H1 (cell line): ENCODE measurements at regions of chr14 and their contacts with region 1.

Region 1: GRCh38 chr14:95431199-95432143 is 85.0 kb downstream of the SYNE3 start:
- DNase-seq: peak in 1 of 2 experiments; percentile 63
- H3K4me3 ChIP-seq: no peak overlapping the region
- H3K27ac ChIP-seq: no peak overlapping the region
- H3K4me1 ChIP-seq: no peaks in the 10 kb centered on the region
- H3K27me3 ChIP-seq: no peaks in the 10 kb centered on the region
- CTCF ChIP-seq: peak; percentile 59 to 90 (median 78)
- EP300 ChIP-seq: no peak
- POLR2A ChIP-seq: no peak
- RAD21 ChIP-seq: peak; percentile 79 to 87

Region 2: DNA sequence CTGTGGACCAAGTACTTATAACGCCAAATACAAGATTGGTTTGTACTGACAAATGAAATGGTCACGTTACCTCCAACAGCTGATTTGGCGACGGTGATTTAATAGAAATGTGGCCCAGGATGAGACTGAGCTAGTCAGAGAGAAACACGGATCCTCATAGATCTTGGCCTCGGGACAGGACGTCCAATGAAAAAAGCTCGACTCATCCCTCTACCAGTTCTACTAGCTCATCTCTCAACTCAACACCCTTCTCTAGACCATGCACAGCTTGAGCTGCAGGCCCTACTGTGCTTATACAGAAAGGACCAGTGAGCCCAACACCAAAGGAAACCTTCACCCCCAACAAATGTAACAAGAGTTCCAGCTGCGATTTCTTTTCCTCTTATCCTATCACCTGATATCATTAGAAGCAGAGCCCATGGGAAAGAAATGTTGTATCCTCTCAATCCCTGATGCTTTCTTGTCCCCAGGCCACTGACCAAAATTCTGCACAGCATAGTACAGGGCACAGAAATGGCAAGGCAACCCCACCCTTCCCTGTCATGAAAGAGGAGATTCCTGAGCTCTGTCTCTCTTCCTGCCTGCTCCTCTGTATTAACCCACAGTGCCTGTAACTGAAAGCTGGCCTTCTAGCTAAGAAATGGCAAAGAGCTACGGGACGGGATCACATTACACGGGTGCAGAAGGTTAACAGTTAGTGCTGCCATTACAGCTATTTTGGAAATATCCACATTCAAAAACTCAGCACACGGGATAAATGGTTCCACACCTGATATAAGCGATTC is 313.3 kb before region 1 on chr14:
- CTCF ChIA-PET with region 1: interaction called, 12 read pairs
- POLR2A ChIA-PET with region 1: no interaction called
- DNase-seq: no peak
- H3K4me3 ChIP-seq: 0 out of 8 replicates have a peak overlapping the region, but pooled peaks of 1 of the 4 experiments have one; percentile 5
- H3K27ac ChIP-seq: no peak overlapping the region
- H3K4me1 ChIP-seq: peaks cover 0 to 5% (median 3%) of the 10 kb centered on the region in 4 experiments; a peak in 2 of 7 replicates
- H3K27me3 ChIP-seq: no peaks in the 10 kb centered on the region
- CTCF ChIP-seq: no peak
- EP300 ChIP-seq: no peak
- POLR2A ChIP-seq: no peak
- RAD21 ChIP-seq: no peak

Region 3: GRCh38 chr14:95282354-95283083 is 149.0 kb before region 1 on chr14:
- CTCF ChIA-PET with region 1: no interaction called
- POLR2A ChIA-PET with region 1: no interaction called
- DNase-seq: no peak
- H3K4me3 ChIP-seq: no peak overlapping the region
- H3K27ac ChIP-seq: no peak overlapping the region
- H3K4me1 ChIP-seq: no peaks in the 10 kb centered on the region; a peak in 1 of 7 replicates
- H3K27me3 ChIP-seq: no peaks in the 10 kb centered on the region
- CTCF ChIP-seq: no peak
- EP300 ChIP-seq: no peak
- POLR2A ChIP-seq: no peak
- RAD21 ChIP-seq: no peak

Region 4: GRCh38 chr14:95413289-95414215 is 17.9 kb before region 1 on chr14:
- CTCF ChIA-PET with region 1: interaction called, 25 read pairs
- POLR2A ChIA-PET with region 1: no interaction called
- DNase-seq: no peak
- H3K4me3 ChIP-seq: no peak overlapping the region
- H3K27ac ChIP-seq: no peak overlapping the region
- H3K4me1 ChIP-seq: peaks cover 0 to 6% (median 2%) of the 10 kb centered on the region in 4 experiments; a peak in 2 of 7 replicates
- H3K27me3 ChIP-seq: no peaks in the 10 kb centered on the region; a peak in 1 of 7 replicates
- CTCF ChIP-seq: no peak
- EP300 ChIP-seq: no peak
- POLR2A ChIP-seq: no peak
- RAD21 ChIP-seq: no peak